ENCODE measurements at regions of chr1 and their contacts with region 1.

Region 1: DNA sequence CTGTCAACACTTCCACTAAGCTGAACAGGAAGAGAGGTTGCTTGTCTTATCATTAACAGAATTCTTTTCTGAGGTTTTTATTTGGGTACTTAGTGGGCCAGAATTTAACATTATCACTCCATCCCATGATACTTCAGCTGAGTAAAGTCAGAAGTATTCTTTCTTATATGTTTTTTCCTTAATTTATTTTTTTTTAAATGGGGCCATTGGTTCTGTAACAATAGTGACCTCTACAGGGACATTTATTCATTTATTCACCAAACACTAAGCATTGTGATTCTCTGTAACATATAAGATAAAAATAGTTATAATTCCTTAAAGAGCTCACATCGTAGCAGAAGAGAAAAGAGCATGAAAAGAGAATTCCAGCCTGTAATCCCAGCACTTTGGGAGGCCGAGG is 9.8 kb downstream of the GREM2 start:
- DNase-seq: no peak
- H3K4me3 Mint-ChIP-seq: no peak overlapping the region
- H3K27ac Mint-ChIP-seq: no peak overlapping the region
- H3K4me1 Mint-ChIP-seq: no peaks in the 10 kb centered on the region
- H3K27me3 Mint-ChIP-seq: no peaks in the 10 kb centered on the region

Region 2: DNA sequence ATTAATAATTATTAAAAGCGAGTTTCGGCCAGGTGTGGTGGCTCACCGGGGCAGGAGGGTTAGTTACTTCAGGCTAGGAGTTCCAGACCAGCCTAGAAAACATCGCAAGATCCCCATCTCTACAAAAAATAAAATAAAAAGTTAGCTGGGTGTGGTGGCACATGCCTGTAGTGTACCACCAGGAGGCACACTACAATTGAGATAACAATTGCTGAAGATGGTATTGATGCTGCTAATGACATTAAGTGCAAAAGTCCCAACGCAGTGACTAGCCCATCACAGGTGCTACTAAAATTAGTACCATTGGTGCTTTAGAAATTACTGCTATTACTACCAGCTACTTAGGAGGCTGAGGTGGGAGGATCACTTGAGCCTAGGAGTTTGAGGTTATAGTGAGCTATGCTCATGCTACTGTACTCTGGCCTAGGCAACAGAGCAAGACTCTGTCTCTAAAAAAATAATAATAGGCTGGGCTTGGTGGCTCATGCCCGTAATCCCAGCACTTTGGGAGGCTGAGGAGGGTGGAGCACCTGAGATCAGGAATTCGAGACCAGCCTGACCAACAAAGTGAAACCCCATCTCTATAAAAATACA is 146.9 kb before region 1 on chr1:
- CTCF ChIA-PET with region 1: interaction called, 11 read pairs
- POLR2A ChIA-PET with region 1: no interaction called
- DNase-seq: no peak
- H3K4me3 Mint-ChIP-seq: no peak overlapping the region
- H3K27ac Mint-ChIP-seq: no peak overlapping the region
- H3K4me1 Mint-ChIP-seq: no peaks in the 10 kb centered on the region
- H3K27me3 Mint-ChIP-seq: no peaks in the 10 kb centered on the region

Measured in activated CD4-positive, alpha-beta memory T cell treated with anti-CD3 and anti-CD28 coated beads, Interleukin-2, amount 10 ng/mL, durations not matched to agents 7 days and 5 days (primary cell).